HepG2 (cell line): ENCODE measurements at regions of chr13 and their contacts with region 1.

Region 1: DNA sequence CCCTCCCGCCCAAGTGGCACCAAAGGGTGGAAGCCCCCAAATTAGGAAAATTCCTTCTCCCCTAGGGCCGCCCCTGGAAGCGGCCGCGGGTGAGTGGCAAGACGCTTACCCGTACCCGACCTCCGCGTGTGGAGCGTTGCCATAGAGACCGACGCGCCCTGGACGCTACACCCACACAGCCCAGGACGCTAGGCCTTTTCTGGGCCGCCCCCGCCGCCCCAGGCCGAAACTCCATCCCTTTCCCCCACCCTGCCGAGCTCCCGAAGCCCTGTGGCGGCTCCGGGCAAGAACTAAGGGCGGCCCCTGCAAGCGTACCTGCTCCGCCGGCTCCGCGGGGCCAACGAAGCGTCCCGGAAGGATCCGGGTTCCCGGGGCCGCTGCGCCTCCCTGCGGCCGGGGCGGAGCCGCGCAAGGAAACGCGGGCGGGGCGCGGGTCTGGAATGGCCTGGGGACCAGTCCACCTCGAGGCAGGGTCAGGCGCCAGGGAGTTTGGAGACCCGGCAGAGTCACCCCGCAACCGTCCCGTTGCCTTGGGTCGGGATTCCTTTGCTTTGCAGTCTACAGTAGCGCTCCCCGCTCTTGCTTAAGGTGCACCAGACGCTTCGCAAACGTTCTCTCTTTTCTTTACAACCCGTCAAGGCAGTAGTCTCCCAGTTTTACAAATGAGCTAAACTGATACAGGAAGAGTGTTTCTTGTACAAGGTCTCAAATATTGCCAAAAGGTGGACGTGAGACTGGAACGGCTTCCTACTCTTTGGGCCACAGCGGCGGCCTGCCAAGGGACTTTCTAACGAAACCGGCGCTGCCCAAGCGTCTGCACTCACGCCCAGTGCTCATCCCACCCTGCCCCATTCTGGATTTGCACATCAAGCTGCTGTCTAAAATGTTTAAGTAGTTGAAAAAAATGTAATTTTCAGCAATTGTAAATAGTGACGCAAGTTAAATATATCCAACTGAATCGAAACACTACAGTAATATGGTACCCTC is at the start of gene NEK5:
- DNase-seq: peak; percentile 49
- ATAC-seq: peak; percentile 93
- H3K4me3 ChIP-seq: peak within 1 kb of the TSS; percentile 63 to 78 (median 76)
- H3K27ac ChIP-seq: no peak within 1 kb of the TSS
- H3K4me1 ChIP-seq: peaks cover 14% of the 10 kb centered on the region
- H3K27me3 ChIP-seq: no peaks in the 10 kb centered on the region
- CTCF ChIP-seq: peak; percentile 96
- EP300 ChIP-seq: no peak
- POLR2A ChIP-seq: no peak
- RAD21 ChIP-seq: peak; percentile 96
- total RNA-seq, gene NEK5: 0.21 and 0.22 TPM in 2 replicates

Region 2: DNA sequence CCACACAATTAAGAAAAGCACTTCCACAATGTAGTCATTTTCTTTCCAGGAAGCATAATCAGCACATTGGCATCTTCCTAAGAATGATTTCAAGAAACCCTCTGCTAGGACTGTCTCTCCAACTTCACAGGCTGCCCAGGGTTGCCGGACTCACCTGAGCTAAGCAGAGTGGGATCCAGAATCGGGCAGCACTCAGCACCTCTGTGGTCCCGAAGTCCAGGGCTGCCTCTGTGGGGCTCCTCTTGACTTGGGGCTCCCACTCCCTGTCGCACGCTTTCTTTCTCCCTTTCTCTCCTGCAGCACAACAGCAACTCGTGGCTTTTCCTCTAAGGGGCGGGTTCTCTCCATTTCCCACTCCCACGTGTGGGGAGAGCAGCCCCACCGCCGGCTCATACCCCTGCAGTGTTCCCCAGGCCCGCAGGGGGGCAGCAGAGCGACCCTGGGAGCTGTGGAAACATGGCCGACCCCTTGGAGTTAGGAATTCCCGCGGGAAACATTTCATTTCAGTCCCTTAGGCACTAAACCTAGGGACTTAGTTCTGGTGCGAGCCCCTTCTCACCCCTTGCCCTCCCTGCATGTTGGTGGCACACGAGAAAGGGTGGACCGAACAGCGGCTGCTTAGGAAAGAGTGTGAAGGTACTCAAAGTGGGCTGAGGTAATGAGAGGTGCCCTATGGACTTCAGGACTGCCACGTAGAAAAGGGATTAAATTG is 284.0 kb before region 1 on chr13 and contains the start of gene TMEM272:
- CTCF ChIA-PET with region 1: interaction called, 8 read pairs
- POLR2A ChIA-PET with region 1: no interaction called
- in situ Hi-C with region 1: no loop called
- intact Hi-C with region 1: loop called (anchors 1 kb)
- DNase-seq: peak; percentile 43
- ATAC-seq: peak; percentile 94
- H3K4me3 ChIP-seq: peak within 1 kb of the TSS; percentile 58 to 73 (median 70); a peak in 5 of 6 replicates
- H3K27ac ChIP-seq: peak within 1 kb of the TSS; percentile 55
- H3K4me1 ChIP-seq: peaks cover 27% of the 10 kb centered on the region
- H3K27me3 ChIP-seq: no peaks in the 10 kb centered on the region
- CTCF ChIP-seq: peak; percentile 90
- EP300 ChIP-seq: 0 out of 4 replicates have a peak, but pooled peaks of 1 of the 2 experiments have one; percentile 10
- POLR2A ChIP-seq: peak; percentile 49 to 72; a peak in 3 of 4 replicates
- RAD21 ChIP-seq: 0 out of 2 replicates have a peak, but pooled peaks have one; percentile 30
- total RNA-seq, gene TMEM272: 0.18 and 0.62 TPM in 2 replicates

Region 3: GRCh38 chr13:51935326-51936201 is 193.4 kb before region 1 on chr13:
- CTCF ChIA-PET with region 1: interaction called, 21 read pairs
- POLR2A ChIA-PET with region 1: interaction called, 4 read pairs
- in situ Hi-C with region 1: no loop called
- intact Hi-C with region 1: loop called (anchors 1 kb)
- DNase-seq: no peak
- ATAC-seq: peak; percentile 76
- H3K4me3 ChIP-seq: no peak overlapping the region
- H3K27ac ChIP-seq: no peak overlapping the region
- H3K4me1 ChIP-seq: no peaks in the 10 kb centered on the region
- H3K27me3 ChIP-seq: no peaks in the 10 kb centered on the region
- CTCF ChIP-seq: peak; percentile 50; the same call in 1 of the 2 replicates
- EP300 ChIP-seq: no peak
- POLR2A ChIP-seq: no peak
- RAD21 ChIP-seq: no peak

Region 4: GRCh38 chr13:52001120-52001731 is 127.8 kb before region 1 on chr13:
- CTCF ChIA-PET with region 1: interaction called, 16 read pairs
- POLR2A ChIA-PET with region 1: interaction called, 12 read pairs
- in situ Hi-C with region 1: no loop called
- intact Hi-C with region 1: loop called (anchors 1 kb)
- DNase-seq: peak; percentile 59
- ATAC-seq: peak; percentile 11; the same call in 2 of the 3 replicates
- H3K4me3 ChIP-seq: no peak overlapping the region
- H3K27ac ChIP-seq: no peak overlapping the region
- H3K4me1 ChIP-seq: peaks cover 96% of the 10 kb centered on the region
- H3K27me3 ChIP-seq: no peaks in the 10 kb centered on the region
- CTCF ChIP-seq: peak; percentile 66
- EP300 ChIP-seq: no peak
- POLR2A ChIP-seq: no peak
- RAD21 ChIP-seq: no peak

Region 5: DNA sequence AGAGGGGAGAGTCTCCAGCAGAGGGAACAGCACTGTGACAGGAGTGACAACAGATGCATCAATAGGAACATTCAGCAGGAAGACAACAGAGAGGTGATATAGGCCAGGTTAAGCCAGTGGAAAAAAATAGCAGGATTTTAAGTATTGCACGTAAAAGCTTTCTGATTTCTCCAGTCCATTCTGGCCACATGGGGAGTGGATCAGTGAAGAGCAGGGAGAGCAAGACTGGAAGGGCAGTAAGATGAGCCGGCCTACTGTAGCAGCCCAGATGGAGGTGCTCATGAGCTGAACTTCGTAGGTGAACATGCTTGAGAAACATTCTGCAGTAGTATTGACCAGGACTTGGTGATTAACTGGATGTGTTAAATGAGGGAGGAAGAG is 102.8 kb before region 1 on chr13:
- CTCF ChIA-PET with region 1: interaction called, 5 read pairs
- POLR2A ChIA-PET with region 1: interaction called, 7 read pairs
- in situ Hi-C with region 1: no loop called
- intact Hi-C with region 1: loop called (anchors 1 kb)
- DNase-seq: peak; percentile 35
- ATAC-seq: peak; percentile 43
- H3K4me3 ChIP-seq: peak overlapping the region in 1 of 3 experiments; percentile 50; a peak in 2 of 6 replicates
- H3K27ac ChIP-seq: peak overlapping the region; percentile 84
- H3K4me1 ChIP-seq: peaks cover 40% of the 10 kb centered on the region
- H3K27me3 ChIP-seq: no peaks in the 10 kb centered on the region
- CTCF ChIP-seq: peak; percentile 57
- EP300 ChIP-seq: no peak
- POLR2A ChIP-seq: no peak
- RAD21 ChIP-seq: no peak

Region 6: DNA sequence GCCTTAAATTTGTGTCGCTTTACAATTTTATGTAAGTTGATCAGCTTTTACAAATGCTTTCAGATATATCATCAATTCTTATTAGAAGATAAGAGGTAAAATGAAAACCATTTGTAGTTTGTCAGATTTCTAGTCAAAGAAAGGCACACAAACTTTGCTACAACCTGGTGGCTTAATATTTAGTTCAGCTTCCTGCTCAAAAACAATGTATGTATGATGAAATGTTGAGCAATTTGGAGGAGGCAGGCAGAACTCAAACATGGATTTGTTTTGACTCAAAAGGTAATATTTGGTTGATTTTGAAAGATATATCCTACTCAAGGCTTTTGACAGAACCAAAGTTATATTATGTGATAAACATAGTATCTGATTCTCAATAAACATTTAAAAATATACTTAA is 24.4 kb before region 1 on chr13:
- CTCF ChIA-PET with region 1: no interaction called
- POLR2A ChIA-PET with region 1: no interaction called
- in situ Hi-C with region 1: no loop called
- intact Hi-C with region 1: no loop called
- DNase-seq: peak; percentile 78
- ATAC-seq: peak; percentile 63
- H3K4me3 ChIP-seq: no peak overlapping the region; a peak in 1 of 6 replicates
- H3K27ac ChIP-seq: peak overlapping the region; percentile 72
- H3K4me1 ChIP-seq: peaks cover 32% of the 10 kb centered on the region
- H3K27me3 ChIP-seq: no peaks in the 10 kb centered on the region
- CTCF ChIP-seq: no peak
- EP300 ChIP-seq: peak in 1 of 2 experiments; percentile 70; a peak in 2 of 4 replicates
- POLR2A ChIP-seq: no peak
- RAD21 ChIP-seq: no peak